Activated CD8-positive, alpha-beta T cell treated with anti-CD3 and anti-CD28 coated beads, Interleukin-2, amount 10 ng/mL, durations not matched to agents 7 days and 5 days (primary cell): ENCODE measurements at regions of chr21 and their contacts with region 1.

Region 1: DNA sequence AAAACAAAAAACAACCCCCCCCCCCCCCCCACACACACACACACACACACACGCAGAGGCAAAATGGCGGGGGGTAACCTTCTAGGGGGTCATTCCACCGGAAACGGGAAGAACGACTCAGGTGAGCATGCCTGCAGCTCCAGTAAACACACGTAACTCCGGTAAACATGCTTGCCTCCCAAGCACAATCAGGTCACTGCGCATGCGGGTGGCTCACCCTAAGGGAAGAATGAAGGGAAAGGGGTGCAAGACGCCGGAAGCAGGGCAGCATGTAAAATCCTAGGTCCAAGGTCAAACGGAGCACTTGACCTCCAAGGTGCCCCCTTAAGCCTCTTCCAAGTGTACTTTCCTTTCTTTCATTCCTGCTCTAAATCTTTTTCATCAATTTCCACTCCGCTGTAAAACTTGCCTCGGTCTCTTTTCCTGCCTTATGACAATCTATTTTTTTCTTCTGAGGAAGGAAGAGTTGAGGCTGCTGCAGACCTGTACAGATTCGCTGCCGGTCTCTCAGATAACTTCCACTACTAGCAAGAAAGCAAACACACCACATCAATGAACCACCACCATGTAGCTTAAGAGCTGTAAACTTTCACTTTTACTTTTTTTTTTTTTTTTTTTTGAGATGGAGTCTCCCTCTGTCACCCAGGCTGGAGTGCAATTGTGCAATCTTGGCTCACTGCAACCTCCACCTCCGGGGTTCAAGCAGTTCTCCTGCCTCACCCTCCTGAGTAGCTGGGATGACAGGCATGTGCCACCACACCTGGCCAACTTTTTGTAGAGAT is 21.0 kb upstream of the CBR3 start:
- DNase-seq: peak; percentile 70
- ATAC-seq: peak; percentile 85
- H3K4me3 Mint-ChIP-seq: peak overlapping the region; percentile 70
- H3K27ac Mint-ChIP-seq: peak overlapping the region; percentile 91
- H3K4me1 Mint-ChIP-seq: peaks cover 42% of the 10 kb centered on the region
- H3K27me3 Mint-ChIP-seq: peaks cover 5% of the 10 kb centered on the region

Region 2: DNA sequence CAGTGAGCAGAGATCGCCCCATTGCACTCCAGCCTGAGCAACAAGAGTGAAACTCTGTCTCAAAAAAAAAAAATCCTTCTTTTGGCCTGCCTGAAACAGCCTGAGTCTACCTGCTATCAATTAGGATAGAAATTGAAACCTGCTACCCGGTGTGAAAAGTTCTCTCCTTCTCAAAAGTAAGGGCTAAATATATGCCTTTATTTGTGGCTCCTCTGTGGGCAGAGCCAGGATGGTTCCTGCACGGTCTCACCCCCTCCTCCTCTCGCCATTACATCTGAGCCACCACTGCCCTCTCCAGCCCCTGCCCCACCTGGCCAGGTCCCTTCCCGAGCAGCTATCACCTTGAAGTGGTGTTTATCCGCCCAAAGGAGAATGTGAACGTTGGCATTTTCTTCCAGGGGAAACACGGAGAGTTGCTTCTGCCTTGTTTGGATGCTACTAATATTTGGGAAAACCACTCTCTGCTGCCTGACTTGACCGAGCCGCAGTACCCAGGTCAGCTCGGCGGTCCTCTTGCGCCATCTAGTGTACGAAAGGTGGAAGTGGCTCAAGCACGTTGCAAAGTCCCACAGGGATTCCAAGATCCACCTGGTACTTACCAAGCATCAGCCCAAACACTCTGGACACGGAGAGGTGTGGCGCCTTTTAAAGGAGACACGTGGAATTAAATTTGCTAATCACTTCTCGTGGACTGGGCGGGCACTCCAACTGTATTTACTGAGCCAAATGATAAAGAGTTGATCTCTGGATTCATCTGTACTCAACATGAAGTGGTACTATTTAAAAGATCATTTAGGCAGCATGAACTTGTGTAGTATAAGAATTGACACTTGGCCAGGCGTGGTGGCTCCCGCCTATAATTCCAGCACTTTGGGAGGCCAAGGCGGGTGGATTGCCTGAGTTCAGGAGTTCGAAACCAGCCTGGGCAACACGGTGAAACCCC is 85.4 kb before region 1 on chr21:
- CTCF ChIA-PET with region 1: interaction called, 23 read pairs
- POLR2A ChIA-PET with region 1: no interaction called
- DNase-seq: peak; percentile 72
- ATAC-seq: peak; percentile 90
- H3K4me3 Mint-ChIP-seq: no peak overlapping the region
- H3K27ac Mint-ChIP-seq: no peak overlapping the region
- H3K4me1 Mint-ChIP-seq: no peaks in the 10 kb centered on the region
- H3K27me3 Mint-ChIP-seq: no peaks in the 10 kb centered on the region

Region 3: GRCh38 chr21:36060159-36060921 is 53.5 kb before region 1 on chr21 and contains the start of gene SETD4:
- CTCF ChIA-PET with region 1: interaction called, 38 read pairs
- POLR2A ChIA-PET with region 1: interaction called, 15 read pairs
- DNase-seq: peak; percentile 92
- ATAC-seq: peak; percentile 91
- H3K4me3 Mint-ChIP-seq: peak within 1 kb of the TSS; percentile 91
- H3K27ac Mint-ChIP-seq: peak within 1 kb of the TSS; percentile 97
- H3K4me1 Mint-ChIP-seq: peaks cover 30% of the 10 kb centered on the region
- H3K27me3 Mint-ChIP-seq: no peaks in the 10 kb centered on the region
- total RNA-seq, gene SETD4: 19.8 to 22.3 TPM

Region 4: DNA sequence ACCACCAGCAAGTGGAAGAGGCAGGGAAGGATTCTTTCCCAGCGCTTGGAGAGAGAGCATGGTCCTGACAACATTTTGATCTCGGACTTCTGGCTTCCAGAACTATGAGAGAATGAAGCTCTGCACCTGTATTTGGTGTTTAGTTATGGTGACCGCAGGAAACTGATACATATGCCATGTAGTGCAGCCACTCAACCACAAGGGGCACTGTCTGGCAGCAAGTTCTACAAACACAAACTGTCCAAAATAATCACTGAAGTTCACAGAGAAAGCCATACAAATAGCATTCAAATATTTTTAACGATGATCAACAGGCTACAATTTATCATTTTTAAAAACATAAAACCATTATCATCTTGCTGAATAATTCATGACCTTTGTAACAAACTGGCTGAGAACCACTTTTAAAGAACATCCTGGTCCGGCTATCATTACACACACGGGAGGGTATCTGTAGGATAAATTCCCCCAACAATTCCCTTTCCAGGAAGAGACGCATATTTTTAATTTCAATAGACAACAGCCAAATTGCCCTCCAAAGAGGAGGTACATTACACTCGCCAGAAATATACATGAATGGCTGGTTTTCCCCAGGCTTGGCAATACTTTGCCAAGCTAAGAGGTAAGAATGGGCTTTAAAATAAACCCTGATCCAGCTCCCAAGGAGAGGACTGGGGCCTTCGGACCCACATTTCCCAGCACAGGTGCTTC is 11.8 kb after region 1 on chr21:
- CTCF ChIA-PET with region 1: interaction called, 23 read pairs
- POLR2A ChIA-PET with region 1: interaction called, 4 read pairs
- DNase-seq: peak; percentile 75
- ATAC-seq: peak; percentile 26
- H3K4me3 Mint-ChIP-seq: no peak overlapping the region
- H3K27ac Mint-ChIP-seq: no peak overlapping the region
- H3K4me1 Mint-ChIP-seq: peaks cover 31% of the 10 kb centered on the region
- H3K27me3 Mint-ChIP-seq: peaks cover 6% of the 10 kb centered on the region

Region 5: GRCh38 chr21:36135391-36136102 is 21.7 kb after region 1 on chr21:
- CTCF ChIA-PET with region 1: interaction called, 11 read pairs
- POLR2A ChIA-PET with region 1: interaction called, 10 read pairs
- DNase-seq: peak; percentile 81
- ATAC-seq: peak; percentile 89
- H3K4me3 Mint-ChIP-seq: peak overlapping the region; percentile 95
- H3K27ac Mint-ChIP-seq: peak overlapping the region; percentile 94
- H3K4me1 Mint-ChIP-seq: peaks cover 41% of the 10 kb centered on the region
- H3K27me3 Mint-ChIP-seq: no peaks in the 10 kb centered on the region

Region 6: DNA sequence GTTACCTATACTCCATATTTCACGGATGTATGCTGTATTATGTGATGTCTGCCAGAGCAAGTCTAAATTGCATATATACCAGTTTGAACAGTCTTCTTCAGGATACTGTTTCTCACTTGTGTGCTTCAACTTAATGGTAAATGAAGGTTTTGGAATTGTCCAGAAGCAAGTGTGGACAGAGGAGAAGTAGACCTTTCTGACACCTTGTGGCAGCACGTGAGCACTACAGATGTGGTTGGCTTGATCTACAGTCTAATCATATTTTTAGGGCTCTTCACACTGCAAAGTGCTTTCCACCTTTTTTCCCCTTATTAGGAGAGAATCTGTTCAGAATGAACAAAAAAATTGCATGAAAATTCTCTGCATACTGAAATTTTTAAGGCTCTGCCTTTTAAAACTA is 217.1 kb after region 1 on chr21:
- CTCF ChIA-PET with region 1: no interaction called
- POLR2A ChIA-PET with region 1: no interaction called
- DNase-seq: peak; percentile 60
- ATAC-seq: peak; percentile 88
- H3K4me3 Mint-ChIP-seq: no peak overlapping the region
- H3K27ac Mint-ChIP-seq: peak overlapping the region; percentile 4
- H3K4me1 Mint-ChIP-seq: peaks cover 31% of the 10 kb centered on the region
- H3K27me3 Mint-ChIP-seq: no peaks in the 10 kb centered on the region

Region 7: DNA sequence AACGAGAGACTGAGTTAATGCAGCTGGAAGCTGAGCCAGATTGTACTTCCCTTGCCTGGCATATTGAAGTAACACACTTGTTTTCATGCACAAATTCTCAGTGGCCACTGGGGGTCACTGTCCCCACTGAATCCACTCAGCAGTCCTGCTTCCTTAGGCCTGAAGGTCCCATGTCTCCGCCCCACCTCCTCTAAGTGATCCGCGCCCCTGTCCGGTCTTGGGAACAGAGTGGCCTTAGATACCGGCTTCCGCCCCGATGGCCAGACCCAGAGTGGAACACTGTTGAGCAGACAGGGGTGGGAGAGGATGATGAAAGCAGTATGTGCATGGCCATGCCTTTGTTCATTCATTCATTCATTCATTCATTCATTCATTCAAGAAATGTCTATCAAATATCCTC is 306.2 kb after region 1 on chr21:
- CTCF ChIA-PET with region 1: no interaction called
- POLR2A ChIA-PET with region 1: no interaction called
- DNase-seq: peak; percentile 60
- ATAC-seq: peak; percentile 63
- H3K4me3 Mint-ChIP-seq: no peak overlapping the region
- H3K27ac Mint-ChIP-seq: no peak overlapping the region
- H3K4me1 Mint-ChIP-seq: peaks cover 10% of the 10 kb centered on the region
- H3K27me3 Mint-ChIP-seq: no peaks in the 10 kb centered on the region